Dendritic cell treated with granulocyte-macrophage colony-stimulating factor and Interleukin-4, amounts not matched to agents 40 ng/mL and 50 ng/mL, for 4 days (primary cell): ENCODE measurements at regions of chr14 and their contacts with region 1.

Region 1: GRCh38 chr14:49816844-49817243 is 35.7 kb downstream of the NEMF start:
- H3K4me3 Mint-ChIP-seq: no peak overlapping the region
- H3K27ac Mint-ChIP-seq: peak overlapping the region; percentile 78
- H3K4me1 Mint-ChIP-seq: peaks cover 11% of the 10 kb centered on the region
- H3K27me3 Mint-ChIP-seq: no peaks in the 10 kb centered on the region

Region 2: DNA sequence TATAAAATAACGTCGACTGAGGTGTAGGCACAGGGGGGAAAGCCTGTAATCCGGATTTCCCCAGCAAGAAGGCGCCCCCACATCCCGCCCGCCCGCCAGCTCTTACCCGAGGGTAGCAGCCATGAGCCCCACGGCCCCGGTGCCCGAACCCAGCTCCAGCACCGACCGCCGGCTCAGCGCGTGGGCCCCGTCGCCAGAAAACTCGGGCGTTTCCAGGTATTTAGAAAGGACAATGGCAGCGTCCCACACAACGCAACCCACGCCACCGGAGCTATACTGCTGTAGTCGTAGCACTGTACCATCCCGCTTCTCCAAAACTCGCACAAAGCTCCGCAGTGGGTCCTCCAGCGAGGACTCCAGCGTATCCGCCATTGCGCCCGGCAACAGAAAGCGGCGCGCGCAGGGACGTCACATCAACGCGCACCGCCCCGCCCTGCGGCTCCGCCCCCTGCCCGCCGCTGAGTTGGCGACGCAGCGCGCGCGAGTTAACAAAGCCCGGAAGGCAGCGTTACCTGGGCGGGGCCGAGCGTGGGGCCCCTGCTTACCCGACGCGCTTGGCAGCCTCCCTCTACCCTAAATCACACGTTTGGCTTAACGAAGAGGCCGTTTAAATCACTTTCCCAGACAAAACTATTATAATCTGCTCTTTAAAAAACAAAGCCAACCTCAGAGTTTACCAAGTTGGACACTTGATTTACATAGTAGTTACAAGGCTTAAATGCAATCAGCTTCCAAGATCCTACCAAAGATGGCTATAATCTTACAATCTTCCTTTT is 299.5 kb after region 1 on chr14 and contains the start of gene VCPKMT:
- intact Hi-C with region 1: no loop called
- H3K4me3 Mint-ChIP-seq: peak within 1 kb of the TSS; percentile 88
- H3K27ac Mint-ChIP-seq: peak within 1 kb of the TSS; percentile 93
- H3K4me1 Mint-ChIP-seq: peaks cover 5% of the 10 kb centered on the region
- H3K27me3 Mint-ChIP-seq: no peaks in the 10 kb centered on the region

Region 3: GRCh38 chr14:50906326-50907065 is 1089.7 kb after region 1 on chr14:
- intact Hi-C with region 1: loop called (anchors 10 kb)
- H3K4me3 Mint-ChIP-seq: no peak overlapping the region
- H3K27ac Mint-ChIP-seq: no peak overlapping the region
- H3K4me1 Mint-ChIP-seq: peaks cover 2% of the 10 kb centered on the region
- H3K27me3 Mint-ChIP-seq: no peaks in the 10 kb centered on the region